CD8-positive, alpha-beta T cell (primary cell): ENCODE measurements at regions of chr1 and their contacts with region 1.

Region 1: GRCh38 chr1:221741711-221742554 is at the start of gene DUSP10:
- DNase-seq: peak; percentile 96 to 100 (median 98)
- ATAC-seq: peak; percentile 87
- H3K4me3 ChIP-seq: peak within 1 kb of the TSS; percentile 65 to 76
- H3K4me3 Mint-ChIP-seq: no peak within 1 kb of the TSS
- H3K27ac ChIP-seq: peak within 1 kb of the TSS; percentile 90 to 99
- H3K27ac Mint-ChIP-seq: no peak within 1 kb of the TSS
- H3K4me1 ChIP-seq: peaks cover 17% of the 10 kb centered on the region
- H3K4me1 Mint-ChIP-seq: peaks cover 30% of the 10 kb centered on the region
- H3K27me3 ChIP-seq: no peaks in the 10 kb centered on the region
- H3K27me3 Mint-ChIP-seq: no peaks in the 10 kb centered on the region
- CTCF ChIP-seq: no peak
- total RNA-seq, gene DUSP10: 63.0 to 64.3 TPM

Region 2: GRCh38 chr1:221543529-221544120 is 198.3 kb before region 1 on chr1:
- CTCF ChIA-PET with region 1: no interaction called
- POLR2A ChIA-PET with region 1: no interaction called
- intact Hi-C with region 1: loop called (anchors 5 to 10 kb)
- DNase-seq: peak in 2 of 9 experiments; percentile 20 to 30
- ATAC-seq: no peak
- H3K4me3 ChIP-seq: no peak overlapping the region
- H3K4me3 Mint-ChIP-seq: no peak overlapping the region
- H3K27ac ChIP-seq: no peak overlapping the region
- H3K27ac Mint-ChIP-seq: no peak overlapping the region
- H3K4me1 ChIP-seq: no peaks in the 10 kb centered on the region
- H3K4me1 Mint-ChIP-seq: no peaks in the 10 kb centered on the region
- H3K27me3 ChIP-seq: no peaks in the 10 kb centered on the region
- H3K27me3 Mint-ChIP-seq: peaks cover 17% of the 10 kb centered on the region
- CTCF ChIP-seq: peak; percentile 44

Region 3: DNA sequence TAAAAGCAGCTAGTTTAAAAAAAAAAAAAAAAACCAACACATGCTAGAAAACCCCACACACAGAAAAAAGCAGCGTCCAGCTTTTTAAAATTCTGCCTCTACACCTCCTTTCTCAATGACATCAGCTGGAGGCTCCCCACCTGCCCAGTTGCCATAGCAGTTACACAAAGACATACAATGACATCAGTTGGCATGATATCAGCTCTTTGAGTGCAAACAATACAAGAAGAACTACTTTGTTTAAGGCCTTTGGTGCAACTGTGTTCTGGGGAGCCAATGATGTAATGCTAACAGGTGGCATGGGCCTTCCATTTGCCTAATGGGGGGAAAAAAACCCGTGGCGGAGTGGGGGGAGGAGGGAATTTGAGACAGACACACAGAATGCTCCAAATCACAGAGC is 32.9 kb before region 1 on chr1:
- CTCF ChIA-PET with region 1: interaction called, 3 read pairs
- POLR2A ChIA-PET with region 1: interaction called, 39 read pairs
- intact Hi-C with region 1: loop called (anchors 1 kb)
- DNase-seq: peak in 7 of 9 experiments; percentile 31 to 91 (median 57)
- ATAC-seq: peak; percentile 41
- H3K4me3 ChIP-seq: no peak overlapping the region
- H3K4me3 Mint-ChIP-seq: no peak overlapping the region
- H3K27ac ChIP-seq: peak overlapping the region in 1 of 2 experiments; percentile 65
- H3K27ac Mint-ChIP-seq: peak overlapping the region; percentile 82
- H3K4me1 ChIP-seq: peaks cover 31% of the 10 kb centered on the region
- H3K4me1 Mint-ChIP-seq: peaks cover 56% of the 10 kb centered on the region
- H3K27me3 ChIP-seq: no peaks in the 10 kb centered on the region
- H3K27me3 Mint-ChIP-seq: no peaks in the 10 kb centered on the region
- CTCF ChIP-seq: no peak

Region 4: GRCh38 chr1:221777431-221778072 is 35.6 kb after region 1 on chr1:
- CTCF ChIA-PET with region 1: interaction called, 9 read pairs
- POLR2A ChIA-PET with region 1: interaction called, 7 read pairs
- intact Hi-C with region 1: loop called (anchors 1 to 2 kb)
- DNase-seq: peak in 7 of 9 experiments; percentile 21 to 93 (median 50)
- ATAC-seq: peak; percentile 72
- H3K4me3 ChIP-seq: peak overlapping the region in 1 of 2 experiments; percentile 5
- H3K4me3 Mint-ChIP-seq: peak overlapping the region; percentile 52
- H3K27ac ChIP-seq: peak overlapping the region; percentile 32 to 75
- H3K27ac Mint-ChIP-seq: peak overlapping the region; percentile 81
- H3K4me1 ChIP-seq: peaks cover 43% of the 10 kb centered on the region
- H3K4me1 Mint-ChIP-seq: peaks cover 51% of the 10 kb centered on the region
- H3K27me3 ChIP-seq: no peaks in the 10 kb centered on the region
- H3K27me3 Mint-ChIP-seq: no peaks in the 10 kb centered on the region
- CTCF ChIP-seq: no peak

Region 5: GRCh38 chr1:222465211-222466041 is 723.5 kb after region 1 on chr1:
- CTCF ChIA-PET with region 1: no interaction called
- POLR2A ChIA-PET with region 1: interaction called, 3 read pairs
- intact Hi-C with region 1: loop called (anchors 10 kb)
- DNase-seq: peak; percentile 66 to 89 (median 71)
- ATAC-seq: peak; percentile 94
- H3K4me3 ChIP-seq: peak overlapping the region; percentile 54 to 68
- H3K4me3 Mint-ChIP-seq: peak overlapping the region; percentile 85
- H3K27ac ChIP-seq: peak overlapping the region; percentile 58 to 65
- H3K27ac Mint-ChIP-seq: peak overlapping the region; percentile 93
- H3K4me1 ChIP-seq: peaks cover 6% of the 10 kb centered on the region
- H3K4me1 Mint-ChIP-seq: peaks cover 14% of the 10 kb centered on the region
- H3K27me3 ChIP-seq: no peaks in the 10 kb centered on the region
- H3K27me3 Mint-ChIP-seq: no peaks in the 10 kb centered on the region
- CTCF ChIP-seq: peak; percentile 100

Region 6: DNA sequence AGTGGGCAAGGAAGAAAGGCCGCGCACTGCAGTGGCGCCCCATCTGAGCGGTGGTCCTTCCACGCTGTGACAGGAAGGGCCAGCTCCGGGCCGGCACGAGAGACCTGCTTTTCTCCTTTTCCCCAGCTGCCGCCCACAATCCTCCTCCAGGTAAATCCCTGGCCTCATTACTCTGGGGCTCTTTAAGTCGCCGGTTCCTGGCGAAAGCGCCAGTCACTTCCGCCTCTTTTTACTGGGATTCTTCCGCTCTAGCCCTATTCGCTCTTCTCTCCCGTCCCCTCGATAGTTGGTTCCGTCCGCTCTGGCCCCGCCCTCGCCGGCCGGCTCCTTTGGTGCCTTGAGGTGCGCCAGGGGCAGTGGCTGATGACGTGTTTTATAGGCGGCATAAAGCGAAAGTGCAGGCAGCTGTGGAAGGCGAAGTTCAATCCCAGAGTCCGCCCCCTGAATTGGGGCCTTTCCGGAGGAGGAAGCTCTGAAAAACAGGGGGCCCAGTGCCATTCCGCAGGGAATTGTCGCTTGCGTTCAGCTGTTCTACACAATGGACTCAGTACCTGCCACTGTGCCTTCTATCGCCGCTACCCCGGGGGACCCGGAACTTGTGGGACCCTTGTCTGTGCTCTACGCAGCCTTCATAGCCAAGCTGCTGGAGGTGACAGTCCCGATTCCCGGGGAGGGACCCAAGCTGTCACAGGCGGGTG is 902.2 kb after region 1 on chr1:
- CTCF ChIA-PET with region 1: no interaction called
- POLR2A ChIA-PET with region 1: no interaction called
- intact Hi-C with region 1: loop called (anchors 1 to 10 kb)
- DNase-seq: peak; percentile 93 to 99 (median 98)
- ATAC-seq: peak; percentile 87
- H3K4me3 ChIP-seq: peak overlapping the region; percentile 90 to 96
- H3K4me3 Mint-ChIP-seq: peak overlapping the region; percentile 96
- H3K27ac ChIP-seq: peak overlapping the region; percentile 96 to 99
- H3K27ac Mint-ChIP-seq: peak overlapping the region; percentile 99
- H3K4me1 ChIP-seq: peaks cover 29% of the 10 kb centered on the region
- H3K4me1 Mint-ChIP-seq: peaks cover 38% of the 10 kb centered on the region
- H3K27me3 ChIP-seq: no peaks in the 10 kb centered on the region
- H3K27me3 Mint-ChIP-seq: no peaks in the 10 kb centered on the region
- CTCF ChIP-seq: no peak